Gastrocnemius medialis (tissue), 4 donors: ENCODE measurements at regions of chr6 and their contacts with region 1.

Region 1: DNA sequence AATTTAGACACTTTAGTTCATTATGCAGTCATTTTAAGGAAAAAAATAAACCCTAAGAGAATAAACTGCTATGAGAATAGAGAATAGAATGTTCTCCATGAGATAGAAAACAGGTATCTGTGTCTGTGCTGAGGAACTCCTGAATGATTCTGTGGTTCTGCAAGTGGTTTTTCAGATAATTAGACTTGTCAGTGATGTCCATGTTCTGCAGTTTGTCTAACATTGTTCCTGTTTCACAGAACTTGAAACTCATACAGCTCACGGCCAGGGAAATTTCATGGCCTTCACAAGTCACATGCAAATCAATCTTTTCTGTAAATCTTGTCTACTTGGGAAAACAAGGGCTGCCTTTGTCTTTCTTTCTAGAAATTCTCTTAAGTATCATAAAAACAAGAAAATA is 73.4 kb upstream of the HMGCLL1 start:
- DNase-seq: no peak
- ATAC-seq: no peak
- H3K4me3 ChIP-seq: no peak overlapping the region
- H3K27ac ChIP-seq: no peak overlapping the region
- H3K4me1 ChIP-seq: no peaks in the 10 kb centered on the region
- H3K27me3 ChIP-seq: no peaks in the 10 kb centered on the region
- CTCF ChIP-seq: no peak
- POLR2A ChIP-seq: no peak

Region 2: GRCh38 chr6:54958446-54958845 is 694.0 kb before region 1 on chr6:
- in situ Hi-C with region 1: no loop called
- intact Hi-C with region 1: no loop called
- DNase-seq: no peak
- ATAC-seq: no peak
- H3K4me3 ChIP-seq: no peak overlapping the region
- H3K27ac ChIP-seq: no peak overlapping the region
- H3K4me1 ChIP-seq: no peaks in the 10 kb centered on the region
- H3K27me3 ChIP-seq: no peaks in the 10 kb centered on the region
- CTCF ChIP-seq: no peak
- POLR2A ChIP-seq: no peak

Region 3: GRCh38 chr6:55474382-55474781 is 178.0 kb before region 1 on chr6:
- in situ Hi-C with region 1: no loop called
- intact Hi-C with region 1: no loop called
- DNase-seq: no peak
- ATAC-seq: no peak
- H3K4me3 ChIP-seq: no peak overlapping the region
- H3K27ac ChIP-seq: no peak overlapping the region
- H3K4me1 ChIP-seq: no peaks in the 10 kb centered on the region
- H3K27me3 ChIP-seq: no peaks in the 10 kb centered on the region
- CTCF ChIP-seq: no peak
- POLR2A ChIP-seq: no peak

Region 4: GRCh38 chr6:55636405-55637102 is 15.9 kb before region 1 on chr6:
- in situ Hi-C with region 1: no loop called
- intact Hi-C with region 1: loop called (anchors 2 kb)
- DNase-seq: no peak
- ATAC-seq: no peak
- H3K4me3 ChIP-seq: no peak overlapping the region
- H3K27ac ChIP-seq: no peak overlapping the region
- H3K4me1 ChIP-seq: no peaks in the 10 kb centered on the region
- H3K27me3 ChIP-seq: no peaks in the 10 kb centered on the region
- CTCF ChIP-seq: no peak
- POLR2A ChIP-seq: no peak